ENCODE measurements at regions of chr1 and their contacts with region 1.

Region 1: GRCh38 chr1:156767101-156767878 is at the start of gene PRCC:
- DNase-seq: peak; percentile 98
- ATAC-seq: peak; percentile 96
- H3K4me3 Mint-ChIP-seq: no peak within 1 kb of the TSS
- H3K27ac Mint-ChIP-seq: no peak within 1 kb of the TSS
- H3K4me1 Mint-ChIP-seq: peaks cover 35% of the 10 kb centered on the region
- H3K27me3 Mint-ChIP-seq: no peaks in the 10 kb centered on the region
- total RNA-seq, gene PRCC: 80.4 to 110 TPM

Region 2: GRCh38 chr1:156601122-156601830 is 166.0 kb before region 1 on chr1 and contains the start of gene GPATCH4:
- CTCF ChIA-PET with region 1: no interaction called
- POLR2A ChIA-PET with region 1: no interaction called
- intact Hi-C with region 1: loop called in 1 of 2 experiments (anchors 1 kb)
- DNase-seq: peak; percentile 89
- ATAC-seq: peak; percentile 76
- H3K4me3 Mint-ChIP-seq: peak within 1 kb of the TSS; percentile 97
- H3K27ac Mint-ChIP-seq: peak within 1 kb of the TSS; percentile 99
- H3K4me1 Mint-ChIP-seq: peaks cover 45% of the 10 kb centered on the region
- H3K27me3 Mint-ChIP-seq: no peaks in the 10 kb centered on the region
- total RNA-seq, gene GPATCH4: 38.5 to 48.7 TPM

Region 3: GRCh38 chr1:156740679-156741612 is 26.3 kb before region 1 on chr1 and contains the start of gene MRPL24:
- CTCF ChIA-PET with region 1: interaction called, 21 read pairs
- POLR2A ChIA-PET with region 1: interaction called, 42 read pairs
- intact Hi-C with region 1: loop called (anchors 1 kb)
- DNase-seq: peak; percentile 98
- ATAC-seq: peak; percentile 86
- H3K4me3 Mint-ChIP-seq: peak within 1 kb of the TSS; percentile 98
- H3K27ac Mint-ChIP-seq: peak within 1 kb of the TSS; percentile 94
- H3K4me1 Mint-ChIP-seq: peaks cover 49% of the 10 kb centered on the region
- H3K27me3 Mint-ChIP-seq: no peaks in the 10 kb centered on the region
- total RNA-seq, gene MRPL24: 81.9 to 89.7 TPM

Region 4: DNA sequence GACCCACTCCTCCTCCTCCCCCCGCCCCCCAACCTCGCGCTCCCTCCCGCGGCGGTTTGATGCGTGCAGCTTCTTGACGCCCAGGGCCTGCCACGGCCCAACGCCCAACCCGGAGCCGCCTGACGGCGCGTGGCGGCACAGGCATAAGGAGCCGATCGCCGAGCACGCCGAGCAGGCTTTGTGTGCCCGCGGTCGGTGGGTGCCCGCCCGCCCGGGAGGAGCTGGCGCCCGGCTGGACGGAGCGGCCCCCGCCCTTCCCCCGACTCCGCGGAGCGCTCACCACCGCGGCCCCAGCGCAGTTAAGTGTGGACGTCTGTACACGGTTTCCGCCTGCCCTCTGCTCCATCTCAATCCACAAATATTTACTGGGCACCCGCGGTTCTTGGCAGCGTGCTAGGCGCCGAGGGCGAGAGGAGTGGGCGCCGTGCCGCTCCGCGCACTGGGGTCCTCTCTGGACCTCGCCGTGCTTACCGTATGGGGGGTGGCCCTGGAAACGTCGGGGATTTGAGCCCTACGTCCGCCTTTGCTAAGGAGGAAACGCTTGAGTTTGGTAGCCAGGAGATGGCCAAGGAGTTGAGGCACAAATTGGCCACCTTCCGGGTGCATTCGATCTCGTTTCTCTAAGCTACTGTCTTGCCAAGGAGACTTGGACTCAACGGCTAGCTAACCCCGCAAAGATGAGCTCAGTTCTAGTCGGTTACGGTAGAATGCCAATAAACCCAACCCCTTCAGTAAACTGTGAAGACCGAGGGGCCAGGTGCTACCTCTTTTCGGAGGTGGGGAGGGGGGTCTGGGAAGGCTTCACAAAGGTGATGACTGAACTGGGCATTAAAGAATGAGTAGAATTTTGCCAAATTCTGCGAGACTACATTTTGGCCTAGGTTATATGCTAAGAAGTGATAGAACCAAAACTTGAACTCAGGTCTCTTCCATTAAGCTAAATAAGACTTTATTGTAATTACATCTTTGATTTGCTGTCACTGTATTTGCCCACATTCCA is 15.2 kb before region 1 on chr1:
- CTCF ChIA-PET with region 1: interaction called, 16 read pairs
- POLR2A ChIA-PET with region 1: interaction called, 20 read pairs
- intact Hi-C with region 1: loop called (anchors 1 kb)
- DNase-seq: peak; percentile 99
- ATAC-seq: peak; percentile 81
- H3K4me3 Mint-ChIP-seq: peak overlapping the region; percentile 98
- H3K27ac Mint-ChIP-seq: peak overlapping the region; percentile 93
- H3K4me1 Mint-ChIP-seq: peaks cover 33% of the 10 kb centered on the region
- H3K27me3 Mint-ChIP-seq: no peaks in the 10 kb centered on the region